ENCODE measurements at regions of chr12 and their contacts with region 1.

Region 1: GRCh38 chr12:65878544-65878943 is 54.3 kb downstream of the HMGA2 start:
- DNase-seq: peak; percentile 73 to 77
- H3K4me3 ChIP-seq: no peak overlapping the region
- H3K4me3 Mint-ChIP-seq: peak overlapping the region; percentile 42
- H3K27ac Mint-ChIP-seq: peak overlapping the region; percentile 69
- H3K4me1 ChIP-seq: peaks cover 51% of the 10 kb centered on the region
- H3K4me1 Mint-ChIP-seq: peaks cover 34% of the 10 kb centered on the region
- H3K27me3 ChIP-seq: no peaks in the 10 kb centered on the region
- H3K27me3 Mint-ChIP-seq: no peaks in the 10 kb centered on the region
- CTCF ChIP-seq: peak; percentile 31 to 62

Region 2: GRCh38 chr12:64890873-64891468 is 987.6 kb before region 1 on chr12:
- CTCF ChIA-PET with region 1: no interaction called
- POLR2A ChIA-PET with region 1: no interaction called
- intact Hi-C with region 1: loop called (anchors 2 kb)
- DNase-seq: peak in 1 of 2 experiments; percentile 65
- H3K4me3 ChIP-seq: peak overlapping the region; percentile 18
- H3K4me3 Mint-ChIP-seq: peak overlapping the region; percentile 73
- H3K27ac Mint-ChIP-seq: peak overlapping the region; percentile 82
- H3K4me1 ChIP-seq: peaks cover 45% of the 10 kb centered on the region
- H3K4me1 Mint-ChIP-seq: peaks cover 28% of the 10 kb centered on the region
- H3K27me3 ChIP-seq: no peaks in the 10 kb centered on the region
- H3K27me3 Mint-ChIP-seq: no peaks in the 10 kb centered on the region
- CTCF ChIP-seq: peak; percentile 53 to 81

Region 3: GRCh38 chr12:65556681-65557437 is 321.7 kb before region 1 on chr12:
- CTCF ChIA-PET with region 1: interaction called, 6 read pairs
- POLR2A ChIA-PET with region 1: no interaction called
- intact Hi-C with region 1: loop called (anchors 1 kb)
- DNase-seq: peak; percentile 80 to 82
- H3K4me3 ChIP-seq: no peak overlapping the region
- H3K4me3 Mint-ChIP-seq: no peak overlapping the region
- H3K27ac Mint-ChIP-seq: no peak overlapping the region
- H3K4me1 ChIP-seq: peaks cover 9% of the 10 kb centered on the region
- H3K4me1 Mint-ChIP-seq: no peaks in the 10 kb centered on the region
- H3K27me3 ChIP-seq: no peaks in the 10 kb centered on the region
- H3K27me3 Mint-ChIP-seq: no peaks in the 10 kb centered on the region
- CTCF ChIP-seq: peak; percentile 81 to 85

Region 4: GRCh38 chr12:65695113-65695865 is 183.3 kb before region 1 on chr12:
- CTCF ChIA-PET with region 1: no interaction called
- POLR2A ChIA-PET with region 1: no interaction called
- intact Hi-C with region 1: loop called (anchors 10 kb)
- DNase-seq: no peak
- H3K4me3 ChIP-seq: no peak overlapping the region
- H3K4me3 Mint-ChIP-seq: no peak overlapping the region
- H3K27ac Mint-ChIP-seq: no peak overlapping the region
- H3K4me1 ChIP-seq: no peaks in the 10 kb centered on the region
- H3K4me1 Mint-ChIP-seq: no peaks in the 10 kb centered on the region
- H3K27me3 ChIP-seq: no peaks in the 10 kb centered on the region
- H3K27me3 Mint-ChIP-seq: no peaks in the 10 kb centered on the region
- CTCF ChIP-seq: no peak

Region 5: DNA sequence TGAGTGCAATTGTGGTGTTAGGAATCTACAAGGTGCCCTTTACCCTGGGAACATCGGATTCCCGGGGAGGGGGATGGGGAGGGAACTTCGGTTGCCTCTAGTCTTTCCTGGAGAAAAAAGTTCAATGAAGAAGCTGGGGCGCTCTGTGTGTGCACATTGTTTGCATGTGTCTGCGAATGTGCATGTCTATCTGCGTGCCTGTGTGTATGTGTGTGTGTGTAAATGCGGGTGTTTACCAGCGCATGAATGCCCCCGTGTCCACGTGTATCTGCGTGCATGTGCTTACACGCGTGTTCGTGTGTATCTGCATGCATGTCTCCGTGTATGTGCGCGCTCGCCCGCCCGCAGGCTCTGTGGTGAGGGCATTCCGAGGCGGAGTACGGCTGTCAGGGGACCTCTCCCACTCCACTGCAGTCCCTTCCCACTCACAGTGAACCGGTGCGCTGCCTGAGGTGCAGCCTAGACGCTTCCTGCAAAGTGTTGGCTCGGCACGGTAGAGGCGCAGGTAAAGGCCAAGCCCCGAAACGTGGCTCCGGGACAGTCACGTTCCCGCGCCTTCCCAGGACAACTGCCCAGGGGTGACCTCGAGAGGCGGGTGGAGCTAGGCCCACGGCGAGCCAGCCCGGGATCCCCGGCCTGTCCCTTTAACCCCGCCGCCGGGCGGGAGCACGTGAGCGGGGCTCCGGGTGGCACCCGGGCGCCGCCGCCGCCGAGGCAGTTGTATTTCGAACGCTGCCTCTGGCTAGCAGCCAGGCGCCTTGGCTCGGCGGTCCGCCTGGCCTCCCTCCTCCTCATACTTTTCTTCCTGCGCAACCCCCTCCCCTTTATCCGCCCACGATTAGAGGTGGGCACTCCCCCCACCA is 54.8 kb before region 1 on chr12:
- CTCF ChIA-PET with region 1: interaction called, 4 read pairs
- POLR2A ChIA-PET with region 1: no interaction called
- intact Hi-C with region 1: loop called (anchors 1 kb)
- DNase-seq: peak; percentile 61 to 76
- H3K4me3 ChIP-seq: peak overlapping the region; percentile 70
- H3K4me3 Mint-ChIP-seq: peak overlapping the region; percentile 97
- H3K27ac Mint-ChIP-seq: peak overlapping the region; percentile 84
- H3K4me1 ChIP-seq: peaks cover 10% of the 10 kb centered on the region; the same call in 1 of the 2 replicates
- H3K4me1 Mint-ChIP-seq: peaks cover 5% of the 10 kb centered on the region
- H3K27me3 ChIP-seq: no peaks in the 10 kb centered on the region
- H3K27me3 Mint-ChIP-seq: no peaks in the 10 kb centered on the region
- CTCF ChIP-seq: no peak

Region 6: DNA sequence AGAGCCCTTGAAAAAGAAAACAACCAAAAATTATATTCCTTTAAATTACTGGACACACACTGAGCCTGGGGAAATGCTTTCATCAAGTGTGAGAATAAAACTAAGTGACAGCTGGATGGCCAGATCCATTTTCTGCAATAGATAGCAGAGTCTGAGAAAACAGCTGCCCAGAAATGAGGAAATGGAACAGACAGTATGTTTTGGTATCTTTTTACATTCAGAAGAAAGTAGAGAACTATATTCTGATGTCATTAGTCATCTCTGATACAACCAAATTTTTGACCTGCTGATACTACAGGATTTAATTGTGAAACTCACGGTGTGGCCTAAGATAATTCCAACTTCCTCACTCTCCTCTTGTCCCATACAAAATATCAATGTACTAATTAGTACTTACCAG is 24.0 kb after region 1 on chr12:
- CTCF ChIA-PET with region 1: no interaction called
- POLR2A ChIA-PET with region 1: no interaction called
- intact Hi-C with region 1: no loop called
- DNase-seq: no peak
- H3K4me3 ChIP-seq: no peak overlapping the region
- H3K4me3 Mint-ChIP-seq: no peak overlapping the region
- H3K27ac Mint-ChIP-seq: no peak overlapping the region
- H3K4me1 ChIP-seq: peaks cover 20% of the 10 kb centered on the region
- H3K4me1 Mint-ChIP-seq: peaks cover 31% of the 10 kb centered on the region
- H3K27me3 ChIP-seq: no peaks in the 10 kb centered on the region
- H3K27me3 Mint-ChIP-seq: no peaks in the 10 kb centered on the region
- CTCF ChIP-seq: no peak

Region 7: GRCh38 chr12:65986047-65986446 is 107.5 kb after region 1 on chr12:
- CTCF ChIA-PET with region 1: no interaction called
- POLR2A ChIA-PET with region 1: no interaction called
- intact Hi-C with region 1: loop called (anchors 1 kb)
- DNase-seq: no peak
- H3K4me3 ChIP-seq: no peak overlapping the region
- H3K4me3 Mint-ChIP-seq: no peak overlapping the region
- H3K27ac Mint-ChIP-seq: no peak overlapping the region
- H3K4me1 ChIP-seq: no peaks in the 10 kb centered on the region
- H3K4me1 Mint-ChIP-seq: peaks cover 4% of the 10 kb centered on the region
- H3K27me3 ChIP-seq: no peaks in the 10 kb centered on the region
- H3K27me3 Mint-ChIP-seq: no peaks in the 10 kb centered on the region
- CTCF ChIP-seq: no peak

Region 8: DNA sequence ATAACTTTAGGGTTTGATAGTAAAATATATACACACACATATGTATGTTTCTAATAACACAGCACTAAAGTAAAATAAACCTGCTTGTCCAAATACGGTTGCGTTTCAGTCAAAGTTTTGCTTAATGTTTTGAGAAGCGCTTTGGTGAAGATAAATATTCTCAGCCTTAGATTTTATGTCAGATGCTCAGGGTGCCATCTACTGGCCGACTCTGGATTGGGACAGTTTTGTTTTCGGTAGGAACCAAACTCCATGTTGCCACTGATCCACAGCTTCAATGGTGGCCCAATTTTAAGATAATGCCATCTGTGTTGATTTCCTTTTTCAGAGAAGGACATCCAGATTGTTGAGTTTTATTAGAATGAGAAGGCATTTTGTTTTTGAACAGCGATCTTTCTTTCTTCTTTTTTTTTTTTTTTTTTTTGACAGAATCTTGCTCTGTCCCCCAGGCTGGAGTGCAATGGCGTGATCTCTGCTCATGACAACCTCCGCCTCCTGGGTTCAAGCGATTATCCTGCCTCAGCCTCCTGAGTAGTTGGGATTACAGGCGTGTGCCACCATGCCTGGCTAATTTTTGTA is 208.9 kb after region 1 on chr12:
- CTCF ChIA-PET with region 1: no interaction called
- POLR2A ChIA-PET with region 1: no interaction called
- intact Hi-C with region 1: loop called (anchors 1 kb)
- DNase-seq: peak; percentile 66 to 78
- H3K4me3 ChIP-seq: no peak overlapping the region
- H3K4me3 Mint-ChIP-seq: no peak overlapping the region
- H3K27ac Mint-ChIP-seq: no peak overlapping the region
- H3K4me1 ChIP-seq: peaks cover 19% of the 10 kb centered on the region
- H3K4me1 Mint-ChIP-seq: peaks cover 13% of the 10 kb centered on the region
- H3K27me3 ChIP-seq: no peaks in the 10 kb centered on the region
- H3K27me3 Mint-ChIP-seq: no peaks in the 10 kb centered on the region
- CTCF ChIP-seq: peak; percentile 73 to 81

Measured in Caco-2 (cell line).